IMR-90 (cell line): ENCODE measurements at regions of chr3 and their contacts with region 1.

Region 1: GRCh38 chr3:55485211-55485791 is 1.8 kb downstream of the WNT5A start:
- DNase-seq: peak; percentile 88
- ATAC-seq: peak; percentile 40
- H3K4me3 ChIP-seq: peak overlapping the region; percentile 89
- H3K27ac ChIP-seq: peak overlapping the region; percentile 98
- H3K4me1 ChIP-seq: peaks cover 14% of the 10 kb centered on the region
- H3K27me3 ChIP-seq: no peaks in the 10 kb centered on the region
- CTCF ChIP-seq: peak; percentile 66
- POLR2A ChIP-seq: no peak; the same call in 1 of the 2 replicates
- RAD21 ChIP-seq: peak; percentile 77

Region 2: GRCh38 chr3:54882129-54882833 is 603.0 kb before region 1 on chr3:
- CTCF ChIA-PET with region 1: no interaction called
- POLR2A ChIA-PET with region 1: no interaction called
- dilution Hi-C with region 1: no loop called
- in situ Hi-C with region 1: loop called (anchors 10 kb)
- intact Hi-C with region 1: no loop called
- DNase-seq: peak; percentile 98
- ATAC-seq: peak; percentile 94
- H3K4me3 ChIP-seq: no peak overlapping the region
- H3K27ac ChIP-seq: peak overlapping the region; percentile 82
- H3K4me1 ChIP-seq: peaks cover 14% of the 10 kb centered on the region
- H3K27me3 ChIP-seq: no peaks in the 10 kb centered on the region
- CTCF ChIP-seq: no peak
- POLR2A ChIP-seq: no peak
- RAD21 ChIP-seq: no peak

Region 3: DNA sequence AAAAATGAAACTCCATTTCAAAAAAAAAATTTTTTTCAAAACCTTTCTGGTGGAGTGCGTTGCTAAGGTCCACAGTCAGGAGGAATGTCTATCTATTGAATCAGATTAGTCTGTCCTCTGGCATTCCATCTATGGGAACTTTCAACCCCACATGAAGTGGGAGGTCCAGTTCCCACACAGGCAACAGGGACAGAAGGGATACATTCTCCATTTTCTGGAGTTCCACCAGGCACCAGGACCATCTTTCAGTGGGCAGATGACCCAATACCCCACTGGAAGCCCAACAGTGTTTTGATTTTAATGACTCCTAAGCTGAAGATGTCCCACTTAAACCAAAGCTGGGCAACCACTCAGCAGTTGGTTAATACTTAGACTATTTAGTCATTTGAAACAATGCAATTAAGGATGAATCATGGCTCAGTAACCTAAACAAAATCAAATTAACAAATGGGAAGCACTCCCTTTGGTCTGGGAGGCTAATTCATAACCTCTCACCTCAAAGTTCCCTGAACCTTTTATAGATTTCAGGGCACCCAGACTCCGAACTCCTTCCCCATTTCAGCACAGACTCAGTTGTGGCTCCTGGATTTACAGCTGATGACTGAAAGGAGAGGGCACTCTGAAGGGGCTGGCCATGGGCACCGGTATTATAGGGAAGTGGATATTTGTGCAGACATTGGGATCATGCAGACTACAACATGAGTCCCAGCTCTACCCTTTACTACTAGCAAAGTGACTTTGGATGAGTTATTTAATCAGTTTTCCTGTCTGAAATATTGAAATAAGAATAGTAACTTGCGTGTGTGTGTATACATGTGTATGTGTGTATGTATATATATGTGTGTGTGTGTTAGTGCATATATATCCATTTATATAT is 293.2 kb before region 1 on chr3:
- CTCF ChIA-PET with region 1: no interaction called
- POLR2A ChIA-PET with region 1: no interaction called
- dilution Hi-C with region 1: no loop called
- in situ Hi-C with region 1: no loop called
- intact Hi-C with region 1: loop called (anchors 5 kb)
- DNase-seq: peak; percentile 98
- ATAC-seq: peak; percentile 82
- H3K4me3 ChIP-seq: no peak overlapping the region
- H3K27ac ChIP-seq: peak overlapping the region; percentile 94
- H3K4me1 ChIP-seq: peaks cover 15% of the 10 kb centered on the region
- H3K27me3 ChIP-seq: no peaks in the 10 kb centered on the region
- CTCF ChIP-seq: no peak
- POLR2A ChIP-seq: peak; percentile 52; the same call in 1 of the 2 replicates
- RAD21 ChIP-seq: peak; percentile 45

Region 4: DNA sequence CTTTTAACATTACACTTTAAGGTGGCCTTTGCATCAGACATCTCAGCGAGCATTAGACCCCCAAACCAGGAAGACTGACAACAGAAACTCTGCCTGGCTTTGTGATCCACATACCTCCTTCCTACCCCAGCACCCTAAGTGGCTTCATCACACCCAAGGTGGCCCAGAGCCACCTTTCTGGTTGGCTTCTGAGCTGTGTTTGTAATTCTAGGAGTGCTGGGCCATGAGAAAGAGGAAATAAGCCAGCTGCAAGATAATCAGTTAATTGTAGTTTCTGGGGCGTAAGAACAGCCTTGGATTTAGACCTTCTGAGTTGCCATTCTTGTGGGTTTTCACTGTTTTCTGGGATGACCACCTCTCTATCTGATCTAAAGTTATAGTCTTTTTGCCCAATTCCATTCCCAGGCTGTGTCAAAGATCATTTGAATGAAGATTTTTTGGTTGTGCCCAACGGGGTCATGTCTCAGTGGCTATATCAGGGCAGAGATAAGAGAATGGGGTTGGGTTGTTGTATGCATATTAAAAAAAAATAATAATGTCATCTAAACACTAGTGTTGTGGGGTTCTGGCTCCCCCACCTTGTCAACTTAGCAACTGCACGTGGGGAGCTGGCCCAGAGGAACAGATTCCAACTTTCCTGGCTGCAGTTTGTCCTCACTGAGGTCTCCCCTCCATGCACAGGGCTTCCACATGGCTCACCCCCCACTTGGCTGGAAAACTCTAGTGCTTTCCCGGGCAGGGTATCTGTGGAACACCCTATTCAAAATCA is 236.6 kb after region 1 on chr3:
- CTCF ChIA-PET with region 1: interaction called, 14 read pairs
- POLR2A ChIA-PET with region 1: no interaction called
- dilution Hi-C with region 1: no loop called
- in situ Hi-C with region 1: loop called (anchors 5 kb)
- intact Hi-C with region 1: loop called (anchors 1 kb)
- DNase-seq: peak; percentile 51
- ATAC-seq: peak; percentile 76
- H3K4me3 ChIP-seq: no peak overlapping the region
- H3K27ac ChIP-seq: no peak overlapping the region
- H3K4me1 ChIP-seq: peaks cover 6% of the 10 kb centered on the region
- H3K27me3 ChIP-seq: peaks cover 6% of the 10 kb centered on the region; the same call in 1 of the 2 replicates
- CTCF ChIP-seq: peak; percentile 72
- POLR2A ChIP-seq: no peak
- RAD21 ChIP-seq: peak; percentile 83

Region 5: GRCh38 chr3:55955891-55956477 is 470.7 kb after region 1 on chr3:
- CTCF ChIA-PET with region 1: no interaction called
- POLR2A ChIA-PET with region 1: no interaction called
- dilution Hi-C with region 1: no loop called
- in situ Hi-C with region 1: no loop called
- intact Hi-C with region 1: loop called (anchors 5 kb)
- DNase-seq: peak; percentile 3
- ATAC-seq: peak; percentile 82
- H3K4me3 ChIP-seq: no peak overlapping the region
- H3K27ac ChIP-seq: peak overlapping the region; percentile 50; the same call in 1 of the 2 replicates
- H3K4me1 ChIP-seq: peaks cover 4% of the 10 kb centered on the region; the same call in 1 of the 2 replicates
- H3K27me3 ChIP-seq: peaks cover under 1% of the 10 kb centered on the region; the same call in 1 of the 2 replicates
- CTCF ChIP-seq: no peak
- POLR2A ChIP-seq: no peak
- RAD21 ChIP-seq: no peak